CD8-positive, alpha-beta T cell (primary cell): ENCODE measurements at regions of chr4 and their contacts with region 1.

Region 1: GRCh38 chr4:87220094-87220822 is at the start of gene KLHL8:
- DNase-seq: peak; percentile 75 to 94 (median 85)
- ATAC-seq: peak; percentile 90
- H3K4me3 ChIP-seq: peak within 1 kb of the TSS; percentile 91 to 99
- H3K4me3 Mint-ChIP-seq: peak within 1 kb of the TSS; percentile 94
- H3K27ac ChIP-seq: peak within 1 kb of the TSS; percentile 86 to 92
- H3K27ac Mint-ChIP-seq: peak within 1 kb of the TSS; percentile 91
- H3K4me1 ChIP-seq: peaks cover 9% of the 10 kb centered on the region
- H3K4me1 Mint-ChIP-seq: peaks cover 18% of the 10 kb centered on the region
- H3K27me3 ChIP-seq: no peaks in the 10 kb centered on the region
- H3K27me3 Mint-ChIP-seq: no peaks in the 10 kb centered on the region
- CTCF ChIP-seq: peak; percentile 39
- total RNA-seq, gene KLHL8: 8.2 to 8.7 TPM

Region 2: DNA sequence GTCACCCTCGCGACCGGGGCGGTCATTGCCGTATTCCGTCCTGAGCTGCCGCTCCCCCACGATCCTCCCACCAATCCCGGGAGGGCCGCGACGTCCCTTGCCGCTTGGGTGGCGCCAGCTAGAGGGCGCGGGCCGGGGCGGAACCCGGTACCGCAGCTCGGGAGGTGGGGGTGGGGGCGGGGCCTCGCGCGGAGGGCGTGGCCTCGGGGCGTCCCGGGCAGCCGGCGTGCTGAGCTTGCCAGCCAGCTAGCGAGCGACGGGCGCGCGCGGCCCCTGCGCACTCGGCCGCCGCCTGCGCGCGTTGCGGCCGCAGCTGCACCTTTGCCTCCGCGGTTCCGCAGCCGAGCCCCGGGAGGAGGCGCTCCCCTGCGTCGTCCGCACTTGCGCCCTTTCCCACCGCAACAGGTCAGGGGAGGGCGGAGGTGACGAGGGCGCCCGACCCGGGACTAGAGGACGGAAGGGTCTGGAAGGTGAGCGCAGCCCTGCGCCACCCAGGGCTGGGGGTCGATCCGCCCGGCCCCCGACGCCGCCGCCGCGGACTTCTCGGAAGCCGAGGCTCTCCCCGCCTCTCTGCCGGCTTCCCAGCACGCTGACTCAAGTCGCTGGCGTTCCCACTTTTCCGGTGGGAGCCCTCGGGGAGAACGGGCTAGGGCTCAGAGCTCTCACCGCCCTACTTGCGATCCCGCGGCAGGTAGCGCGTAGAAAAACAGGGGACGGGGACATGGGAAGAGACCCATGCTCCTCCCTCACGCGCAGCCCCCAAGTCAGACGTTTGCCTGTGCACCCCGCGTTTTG is 285.3 kb before region 1 on chr4 and contains the start of gene AFF1:
- CTCF ChIA-PET with region 1: no interaction called
- POLR2A ChIA-PET with region 1: interaction called, 5 read pairs
- intact Hi-C with region 1: loop called (anchors 1 kb)
- DNase-seq: peak; percentile 74 to 97 (median 85)
- ATAC-seq: peak; percentile 71
- H3K4me3 ChIP-seq: peak within 1 kb of the TSS; percentile 76 to 87
- H3K4me3 Mint-ChIP-seq: peak within 1 kb of the TSS; percentile 88
- H3K27ac ChIP-seq: peak within 1 kb of the TSS; percentile 81 to 85
- H3K27ac Mint-ChIP-seq: peak within 1 kb of the TSS; percentile 95
- H3K4me1 ChIP-seq: peaks cover 42% of the 10 kb centered on the region
- H3K4me1 Mint-ChIP-seq: peaks cover 50% of the 10 kb centered on the region
- H3K27me3 ChIP-seq: no peaks in the 10 kb centered on the region
- H3K27me3 Mint-ChIP-seq: no peaks in the 10 kb centered on the region
- CTCF ChIP-seq: peak; percentile 44
- total RNA-seq, gene AFF1: 32.3 to 33.8 TPM

Region 3: GRCh38 chr4:86999136-86999643 is 221.1 kb before region 1 on chr4:
- CTCF ChIA-PET with region 1: no interaction called
- POLR2A ChIA-PET with region 1: no interaction called
- intact Hi-C with region 1: no loop called
- DNase-seq: no peak
- ATAC-seq: no peak
- H3K4me3 ChIP-seq: no peak overlapping the region
- H3K4me3 Mint-ChIP-seq: no peak overlapping the region
- H3K27ac ChIP-seq: no peak overlapping the region
- H3K27ac Mint-ChIP-seq: peak overlapping the region; percentile 64
- H3K4me1 ChIP-seq: peaks cover 4% of the 10 kb centered on the region
- H3K4me1 Mint-ChIP-seq: peaks cover 32% of the 10 kb centered on the region
- H3K27me3 ChIP-seq: no peaks in the 10 kb centered on the region
- H3K27me3 Mint-ChIP-seq: no peaks in the 10 kb centered on the region
- CTCF ChIP-seq: no peak

Region 4: DNA sequence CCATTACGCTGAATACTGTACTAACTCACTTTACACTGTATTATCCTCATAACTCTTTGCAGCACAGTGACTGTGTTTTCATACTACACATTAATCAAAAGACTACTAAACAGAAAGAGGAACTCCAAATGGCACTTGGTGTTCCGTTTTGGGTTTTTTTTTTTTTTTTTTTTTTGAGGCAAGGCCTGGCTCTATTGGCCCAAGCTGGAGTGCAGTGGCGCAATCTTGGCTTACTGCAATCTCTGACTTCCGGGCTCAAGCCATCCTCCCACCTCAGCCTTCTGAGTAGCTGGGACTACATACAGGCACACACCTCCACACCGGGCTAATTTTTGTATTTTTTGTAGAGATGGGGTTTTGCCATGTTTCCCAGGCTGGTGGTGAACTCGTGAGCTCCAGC is 10.6 kb before region 1 on chr4:
- CTCF ChIA-PET with region 1: interaction called, 12 read pairs
- POLR2A ChIA-PET with region 1: interaction called, 8 read pairs
- intact Hi-C with region 1: no loop called
- DNase-seq: peak in 3 of 9 experiments; percentile 24 to 60 (median 49)
- ATAC-seq: peak; percentile 77
- H3K4me3 ChIP-seq: no peak overlapping the region
- H3K4me3 Mint-ChIP-seq: peak overlapping the region; percentile 62
- H3K27ac ChIP-seq: no peak overlapping the region
- H3K27ac Mint-ChIP-seq: peak overlapping the region; percentile 49
- H3K4me1 ChIP-seq: no peaks in the 10 kb centered on the region
- H3K4me1 Mint-ChIP-seq: peaks cover 38% of the 10 kb centered on the region
- H3K27me3 ChIP-seq: no peaks in the 10 kb centered on the region
- H3K27me3 Mint-ChIP-seq: no peaks in the 10 kb centered on the region
- CTCF ChIP-seq: no peak

Region 5: DNA sequence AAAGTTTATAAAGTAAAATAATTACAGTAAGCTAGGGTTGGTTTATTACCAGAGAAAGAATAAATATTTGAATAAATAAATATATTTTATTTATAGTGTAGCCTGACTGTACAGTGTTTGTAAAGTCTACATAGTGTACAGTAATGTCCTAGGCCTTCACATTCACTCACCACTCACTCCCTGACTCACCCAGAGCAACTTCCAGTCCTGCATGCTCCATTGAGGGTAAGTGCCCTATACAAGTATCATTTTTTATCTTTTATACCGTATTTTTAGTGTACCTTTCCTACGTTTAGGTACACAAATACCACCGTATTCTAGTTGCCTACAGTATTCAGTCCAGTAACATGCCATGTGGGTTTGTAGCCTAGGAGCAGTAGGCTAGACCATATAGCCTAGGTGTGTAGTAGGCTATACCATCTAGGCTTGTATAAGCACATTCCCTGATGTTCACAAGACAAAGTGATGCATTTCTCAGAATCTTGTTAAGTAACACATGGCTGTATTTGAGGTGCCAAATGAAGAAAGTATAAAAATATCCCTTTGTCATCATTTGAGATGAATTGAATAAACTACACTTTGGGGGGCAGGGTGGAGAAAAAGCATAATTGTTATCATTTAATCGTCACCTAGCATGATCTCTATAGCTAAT is 14.9 kb after region 1 on chr4:
- CTCF ChIA-PET with region 1: interaction called, 6 read pairs
- POLR2A ChIA-PET with region 1: interaction called, 3 read pairs
- intact Hi-C with region 1: loop called (anchors 1 to 2 kb)
- DNase-seq: peak in 1 of 9 experiments; percentile 5
- ATAC-seq: no peak
- H3K4me3 ChIP-seq: peak overlapping the region; percentile 52 to 61
- H3K4me3 Mint-ChIP-seq: peak overlapping the region; percentile 79
- H3K27ac ChIP-seq: no peak overlapping the region
- H3K27ac Mint-ChIP-seq: no peak overlapping the region
- H3K4me1 ChIP-seq: peaks cover 4% of the 10 kb centered on the region
- H3K4me1 Mint-ChIP-seq: peaks cover 2% of the 10 kb centered on the region
- H3K27me3 ChIP-seq: no peaks in the 10 kb centered on the region
- H3K27me3 Mint-ChIP-seq: no peaks in the 10 kb centered on the region
- CTCF ChIP-seq: no peak

Region 6: GRCh38 chr4:87688316-87688715 is 468.1 kb after region 1 on chr4:
- CTCF ChIA-PET with region 1: no interaction called
- POLR2A ChIA-PET with region 1: no interaction called
- intact Hi-C with region 1: no loop called
- DNase-seq: no peak
- ATAC-seq: no peak
- H3K4me3 ChIP-seq: no peak overlapping the region
- H3K4me3 Mint-ChIP-seq: no peak overlapping the region
- H3K27ac ChIP-seq: no peak overlapping the region
- H3K27ac Mint-ChIP-seq: no peak overlapping the region
- H3K4me1 ChIP-seq: no peaks in the 10 kb centered on the region
- H3K4me1 Mint-ChIP-seq: no peaks in the 10 kb centered on the region
- H3K27me3 ChIP-seq: no peaks in the 10 kb centered on the region
- H3K27me3 Mint-ChIP-seq: peaks cover 5% of the 10 kb centered on the region
- CTCF ChIP-seq: no peak

Region 7: GRCh38 chr4:88456757-88457306 is 1236.6 kb after region 1 on chr4 and contains the start of gene HERC5:
- CTCF ChIA-PET with region 1: no interaction called
- POLR2A ChIA-PET with region 1: no interaction called
- intact Hi-C with region 1: loop called in 1 of 2 experiments (anchors 10 kb)
- DNase-seq: peak; percentile 83 to 96 (median 91)
- ATAC-seq: peak; percentile 95
- H3K4me3 ChIP-seq: peak within 1 kb of the TSS; percentile 79 to 87
- H3K4me3 Mint-ChIP-seq: peak within 1 kb of the TSS; percentile 100
- H3K27ac ChIP-seq: peak within 1 kb of the TSS; percentile 63 to 74
- H3K27ac Mint-ChIP-seq: peak within 1 kb of the TSS; percentile 100
- H3K4me1 ChIP-seq: peaks cover 13% of the 10 kb centered on the region
- H3K4me1 Mint-ChIP-seq: peaks cover 33% of the 10 kb centered on the region
- H3K27me3 ChIP-seq: no peaks in the 10 kb centered on the region
- H3K27me3 Mint-ChIP-seq: no peaks in the 10 kb centered on the region
- CTCF ChIP-seq: no peak
- total RNA-seq, gene HERC5: 13.2 to 13.5 TPM